GM12878 (cell line): ENCODE measurements at regions of chr15 and their contacts with region 1.

Region 1: GRCh38 chr15:35751413-35752133 is 205.6 kb upstream of the DPH6 start:
- DNase-seq: peak; percentile 12
- ATAC-seq: peak; percentile 88
- H3K4me3 ChIP-seq: no peak overlapping the region
- H3K27ac ChIP-seq: no peak overlapping the region
- H3K4me1 ChIP-seq: no peaks in the 10 kb centered on the region
- H3K27me3 ChIP-seq: no peaks in the 10 kb centered on the region
- CTCF ChIP-seq: peak; percentile 62 to 75 (median 71); a peak in 5 of 6 replicates
- EP300 ChIP-seq: no peak
- POLR2A ChIP-seq: no peak
- RAD21 ChIP-seq: peak; percentile 73

Region 2: DNA sequence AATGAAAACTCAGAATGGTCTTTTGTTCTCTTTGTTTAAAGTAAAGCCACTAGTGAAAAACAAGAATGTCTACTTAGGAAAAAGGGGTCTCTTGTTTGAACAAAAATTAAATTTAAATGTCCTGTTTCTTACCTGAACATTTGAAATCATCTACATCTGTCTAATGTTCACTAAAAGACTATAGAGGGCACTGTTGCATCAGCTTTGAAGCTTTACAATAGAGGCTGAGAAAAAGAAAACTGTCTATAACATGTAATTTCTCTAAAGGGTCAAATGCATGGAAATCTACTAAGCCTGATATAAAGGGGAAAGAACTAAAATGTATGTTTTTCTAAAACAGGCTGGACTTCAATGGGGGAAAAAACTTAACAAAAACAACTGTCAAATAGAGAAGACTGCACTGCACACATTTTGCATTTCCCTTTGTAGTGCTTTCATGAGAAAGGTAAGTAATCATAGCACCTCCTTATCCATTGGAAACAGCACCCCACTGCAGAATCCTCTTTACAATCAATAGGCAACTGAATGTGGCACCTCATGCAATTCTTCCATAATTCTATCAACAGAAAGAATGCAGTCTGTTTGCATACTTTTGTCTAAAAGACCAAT is 231.9 kb before region 1 on chr15:
- CTCF ChIA-PET with region 1: interaction called, 12 read pairs
- POLR2A ChIA-PET with region 1: no interaction called
- RAD21 ChIA-PET with region 1: interaction called, 11 read pairs
- SMC1A ChIA-PET with region 1: interaction called, 4 read pairs
- in situ Hi-C with region 1: no loop called
- intact Hi-C with region 1: loop called (anchors 5 kb)
- DNase-seq: peak; percentile 19
- ATAC-seq: peak; percentile 79
- H3K4me3 ChIP-seq: no peak overlapping the region
- H3K27ac ChIP-seq: no peak overlapping the region
- H3K4me1 ChIP-seq: no peaks in the 10 kb centered on the region
- H3K27me3 ChIP-seq: no peaks in the 10 kb centered on the region
- CTCF ChIP-seq: peak; percentile 41 to 71 (median 62); a peak in 5 of 6 replicates
- EP300 ChIP-seq: no peak
- POLR2A ChIP-seq: no peak
- RAD21 ChIP-seq: peak; percentile 88

Region 3: DNA sequence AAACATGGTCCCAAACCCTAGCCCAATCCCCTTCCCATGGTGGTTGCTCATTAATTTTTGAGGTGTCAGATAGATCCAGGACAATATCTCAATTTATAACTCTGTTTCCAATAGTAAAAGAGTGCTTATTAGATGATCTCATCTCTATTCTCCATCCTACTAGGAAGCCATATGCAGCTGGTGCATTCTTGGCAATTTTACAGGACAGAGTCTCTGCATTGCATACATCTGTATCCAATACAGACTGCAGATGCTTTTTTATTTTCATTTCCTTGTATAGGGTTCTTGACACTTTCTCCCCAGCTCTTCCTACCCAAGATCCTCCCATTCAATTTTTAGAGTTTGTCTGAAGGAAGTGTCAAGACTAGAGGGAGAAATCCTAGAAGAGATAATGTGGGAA is 10.8 kb before region 1 on chr15:
- CTCF ChIA-PET with region 1: interaction called, 34 read pairs
- POLR2A ChIA-PET with region 1: no interaction called
- RAD21 ChIA-PET with region 1: interaction called, 5 read pairs
- SMC1A ChIA-PET with region 1: interaction called, 4 read pairs
- in situ Hi-C with region 1: no loop called
- intact Hi-C with region 1: no loop called
- DNase-seq: no peak
- ATAC-seq: no peak
- H3K4me3 ChIP-seq: no peak overlapping the region
- H3K27ac ChIP-seq: no peak overlapping the region
- H3K4me1 ChIP-seq: no peaks in the 10 kb centered on the region
- H3K27me3 ChIP-seq: no peaks in the 10 kb centered on the region
- CTCF ChIP-seq: no peak
- EP300 ChIP-seq: no peak
- POLR2A ChIP-seq: no peak
- RAD21 ChIP-seq: no peak

Region 4: DNA sequence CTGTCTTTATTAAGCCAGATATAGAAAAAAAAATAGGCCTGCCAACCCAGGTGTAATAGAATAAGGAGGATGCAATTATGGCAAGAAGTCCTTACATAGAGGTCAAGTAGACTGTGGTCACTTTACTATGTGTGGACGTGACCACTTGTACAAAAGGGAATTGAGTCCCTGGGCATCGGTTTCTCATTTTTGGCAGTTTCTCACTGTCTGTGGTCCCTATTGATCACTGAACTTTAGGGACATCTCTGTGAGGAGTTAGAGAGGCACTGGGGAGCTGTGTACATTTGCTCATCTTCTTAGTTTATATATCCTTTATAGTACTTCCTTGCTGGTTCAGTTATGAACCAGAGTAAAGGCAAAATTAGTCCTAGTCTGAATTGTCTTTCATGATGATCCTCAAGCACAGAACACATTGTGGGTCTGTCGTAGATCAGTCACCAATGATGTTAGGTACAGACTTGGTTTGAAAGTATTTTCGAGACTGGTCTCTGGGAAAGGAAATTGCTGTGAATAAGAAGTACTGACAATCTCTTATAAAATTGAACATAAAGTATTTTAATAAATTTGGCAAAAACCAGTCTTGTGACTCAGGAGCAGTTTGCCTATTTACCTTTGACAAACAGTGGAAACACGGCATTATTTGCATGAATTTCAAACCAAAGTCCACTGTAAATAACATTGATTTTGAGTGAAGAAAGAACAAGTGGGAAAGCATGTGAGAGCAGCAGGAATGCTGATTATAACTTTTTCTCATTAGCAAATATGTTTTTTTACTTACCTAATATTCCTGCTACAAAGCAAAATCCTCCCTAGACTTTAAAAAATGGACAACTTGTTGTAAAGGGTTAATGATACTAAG is 13.3 kb after region 1 on chr15:
- CTCF ChIA-PET with region 1: interaction called, 21 read pairs
- POLR2A ChIA-PET with region 1: no interaction called
- RAD21 ChIA-PET with region 1: no interaction called
- SMC1A ChIA-PET with region 1: interaction called, 7 read pairs
- in situ Hi-C with region 1: no loop called
- intact Hi-C with region 1: no loop called
- DNase-seq: no peak
- ATAC-seq: no peak
- H3K4me3 ChIP-seq: no peak overlapping the region
- H3K27ac ChIP-seq: no peak overlapping the region
- H3K4me1 ChIP-seq: no peaks in the 10 kb centered on the region
- H3K27me3 ChIP-seq: no peaks in the 10 kb centered on the region
- CTCF ChIP-seq: no peak
- EP300 ChIP-seq: no peak
- POLR2A ChIP-seq: no peak
- RAD21 ChIP-seq: no peak

Region 5: GRCh38 chr15:37134699-37135131 is 1383.1 kb after region 1 on chr15:
- CTCF ChIA-PET with region 1: interaction called, 4 read pairs
- POLR2A ChIA-PET with region 1: no interaction called
- RAD21 ChIA-PET with region 1: no interaction called
- SMC1A ChIA-PET with region 1: interaction called, 4 read pairs
- in situ Hi-C with region 1: no loop called
- intact Hi-C with region 1: loop called (anchors 10 kb)
- DNase-seq: no peak
- ATAC-seq: peak; percentile 80
- H3K4me3 ChIP-seq: no peak overlapping the region
- H3K27ac ChIP-seq: no peak overlapping the region
- H3K4me1 ChIP-seq: peaks cover 4% of the 10 kb centered on the region; the same call in 1 of the 2 replicates
- H3K27me3 ChIP-seq: peaks cover 0 to 2% of the 10 kb centered on the region in 2 experiments; a peak in 2 of 4 replicates
- CTCF ChIP-seq: peak; percentile 53 to 60 (median 55); a peak in 5 of 6 replicates
- EP300 ChIP-seq: no peak
- POLR2A ChIP-seq: no peak
- RAD21 ChIP-seq: peak; percentile 34